ENCODE measurements at regions of chr17 and their contacts with region 1.

Region 1: GRCh38 chr17:31740611-31741082 is 118.4 kb downstream of the COPRS start:
- DNase-seq: no peak
- H3K4me3 ChIP-seq: no peak overlapping the region
- H3K27ac ChIP-seq: peak overlapping the region; percentile 57 to 77 (median 66)
- H3K4me1 ChIP-seq: peaks cover 50 to 87% (median 73%) of the 10 kb centered on the region in 4 donors
- H3K27me3 ChIP-seq: no peaks in the 10 kb centered on the region
- CTCF ChIP-seq: no peak
- EP300 ChIP-seq: no peak
- POLR2A ChIP-seq: no peak

Region 2: DNA sequence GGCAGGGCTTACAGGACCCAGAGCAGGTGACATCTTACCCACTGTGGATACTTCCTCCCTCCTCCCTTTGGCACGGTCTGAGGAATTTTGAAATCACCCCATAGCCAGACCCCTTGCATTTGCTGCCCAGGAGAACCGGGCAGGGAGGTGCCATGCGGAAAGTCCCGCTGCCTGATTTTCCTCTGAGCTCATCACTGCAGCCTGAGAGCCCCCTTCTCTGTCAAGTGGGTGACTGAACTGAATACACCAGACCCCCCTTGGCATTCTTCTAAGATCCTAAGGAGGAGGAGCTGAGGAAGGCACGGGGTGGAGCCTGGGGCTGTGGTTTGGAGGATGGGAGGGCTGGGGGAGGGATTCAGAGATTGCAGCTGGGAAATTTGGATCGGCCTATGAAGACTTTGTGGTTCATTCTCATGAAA is 175.8 kb before region 1 on chr17:
- intact Hi-C with region 1: loop called (anchors 5 kb)
- DNase-seq: no peak
- H3K4me3 ChIP-seq: peak overlapping the region in 1 of 4 donors; percentile 20
- H3K27ac ChIP-seq: peak overlapping the region; percentile 79 to 87 (median 83)
- H3K4me1 ChIP-seq: peaks cover 73 to 100% (median 96%) of the 10 kb centered on the region in 4 donors
- H3K27me3 ChIP-seq: no peaks in the 10 kb centered on the region
- CTCF ChIP-seq: no peak
- EP300 ChIP-seq: no peak
- POLR2A ChIP-seq: no peak

Region 3: GRCh38 chr17:31787857-31788570 is 47.4 kb after region 1 on chr17:
- intact Hi-C with region 1: loop called (anchors 10 kb)
- DNase-seq: no peak
- H3K4me3 ChIP-seq: no peak overlapping the region
- H3K27ac ChIP-seq: peak overlapping the region; percentile 76 to 79 (median 77)
- H3K4me1 ChIP-seq: peaks cover 3 to 14% (median 14%) of the 10 kb centered on the region in 4 donors
- H3K27me3 ChIP-seq: no peaks in the 10 kb centered on the region
- CTCF ChIP-seq: no peak
- EP300 ChIP-seq: peak; percentile 26
- POLR2A ChIP-seq: no peak

Region 4: DNA sequence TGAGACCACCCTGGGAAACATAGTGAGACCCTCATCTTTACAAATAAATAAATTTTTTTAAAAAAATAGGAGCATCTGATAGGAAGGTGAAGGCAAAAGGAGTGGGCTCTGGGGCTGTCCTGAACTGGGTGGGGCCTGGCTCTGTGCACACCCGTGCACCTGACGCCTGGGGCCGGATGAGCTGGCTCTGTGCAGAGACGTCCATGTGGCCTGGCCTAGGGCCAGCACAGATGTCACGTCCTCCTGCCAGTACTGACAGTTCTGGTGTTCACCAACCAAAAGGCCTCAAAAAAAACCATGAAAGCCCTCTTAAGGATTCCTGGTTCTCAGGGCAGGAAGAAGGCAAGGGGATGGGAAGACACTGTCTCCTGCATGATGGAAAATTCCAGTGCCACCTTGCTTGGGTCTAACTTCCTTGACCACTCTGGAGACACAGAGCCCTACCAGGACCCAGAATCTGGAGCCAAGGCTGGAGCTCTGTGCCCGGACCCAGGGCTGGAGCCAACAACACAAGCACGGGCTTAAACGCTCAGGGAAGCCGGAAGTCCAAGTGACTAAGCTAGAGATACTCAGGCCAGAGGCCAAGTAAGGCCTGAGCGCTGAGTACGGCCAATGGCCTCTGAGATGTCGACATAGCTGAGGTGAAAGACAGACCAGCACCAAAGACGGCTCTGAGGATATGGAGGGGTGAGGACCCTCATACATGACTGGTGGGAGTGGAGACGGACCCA is 85.5 kb after region 1 on chr17:
- intact Hi-C with region 1: no loop called
- DNase-seq: no peak
- H3K4me3 ChIP-seq: no peak overlapping the region
- H3K27ac ChIP-seq: no peak overlapping the region
- H3K4me1 ChIP-seq: peaks cover 0 to under 1% (median 0%) of the 10 kb centered on the region in 4 donors
- H3K27me3 ChIP-seq: no peaks in the 10 kb centered on the region
- CTCF ChIP-seq: no peak
- EP300 ChIP-seq: no peak
- POLR2A ChIP-seq: no peak

Region 5: GRCh38 chr17:31842183-31843069 is 101.8 kb after region 1 on chr17:
- intact Hi-C with region 1: loop called (anchors 10 kb)
- DNase-seq: no peak
- H3K4me3 ChIP-seq: peak overlapping the region; percentile 18 to 39 (median 25)
- H3K27ac ChIP-seq: peak overlapping the region; percentile 62 to 82 (median 72)
- H3K4me1 ChIP-seq: peaks cover 20 to 55% (median 38%) of the 10 kb centered on the region in 4 donors
- H3K27me3 ChIP-seq: no peaks in the 10 kb centered on the region
- CTCF ChIP-seq: peak; percentile 96 to 97 (median 97)
- EP300 ChIP-seq: no peak
- POLR2A ChIP-seq: no peak